Dorsolateral prefrontal cortex (tissue), 120 donors: ENCODE measurements at regions of chr14 and their contacts with region 1.

Region 1: DNA sequence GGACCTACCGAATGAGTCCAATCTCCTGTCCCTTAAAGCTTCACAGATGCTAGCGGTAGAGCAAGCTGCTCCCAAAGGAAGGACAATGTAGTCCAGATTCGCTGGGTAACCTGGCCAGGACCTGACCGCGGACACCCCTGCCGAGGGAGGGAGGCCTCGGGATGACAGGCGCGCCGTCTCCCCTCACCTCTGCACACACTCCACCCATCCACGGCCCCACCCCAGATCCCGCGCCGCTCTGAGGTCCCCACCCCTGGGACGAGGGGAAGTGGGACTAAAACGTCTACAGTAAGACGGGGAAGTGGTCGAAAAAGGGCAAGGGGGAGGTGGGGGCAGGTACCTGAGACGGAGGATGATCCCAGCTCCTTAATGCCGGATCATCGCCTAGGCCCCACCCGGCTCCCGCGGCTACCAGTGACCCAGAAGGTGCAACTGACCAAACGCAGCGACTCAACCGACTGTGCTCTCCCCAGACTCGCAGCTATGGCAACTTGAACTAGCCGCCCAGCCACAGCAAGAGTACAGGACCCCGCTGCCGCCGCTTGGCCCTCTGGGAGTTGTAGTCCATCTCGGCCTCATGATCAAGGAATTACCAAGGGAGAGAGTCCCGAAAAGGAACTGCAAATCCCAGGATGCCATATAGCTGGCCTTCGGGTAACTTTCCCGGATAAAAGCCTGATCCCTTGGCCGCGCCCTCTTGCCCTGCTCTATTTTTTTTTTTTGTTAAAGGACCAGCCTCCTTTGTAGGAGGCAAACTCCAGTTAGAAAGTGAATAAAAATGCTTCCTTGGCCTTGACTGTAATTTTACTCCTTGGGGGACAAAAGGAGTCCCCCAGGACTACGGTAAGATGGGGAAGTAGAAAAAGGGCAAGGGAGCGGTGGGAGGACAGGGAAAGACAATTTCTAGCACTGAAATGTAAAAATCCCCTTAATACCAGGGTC is at the start of gene CEP128:
- DNase-seq: peak; percentile 90 to 97 (median 96)
- H3K4me3 ChIP-seq: peak within 1 kb of the TSS; percentile 57 to 96 (median 79)
- H3K27ac ChIP-seq: peak within 1 kb of the TSS in 36 of 59 donors; percentile 2 to 74 (median 49)
- H3K27me3 ChIP-seq: peaks cover 0 to 11% (median 0%) of the 10 kb centered on the region in 45 donors
- CTCF ChIP-seq: peak in 31 of 56 donors; percentile 4 to 61 (median 30)
- total RNA-seq, gene CEP128: 5.2 to 21.4 (median 13.1) TPM

Region 2: GRCh38 chr14:81220830-81221578 is 279.5 kb after region 1 on chr14 and contains the start of gene GTF2A1:
- intact Hi-C with region 1: loop called in 1 of 2 experiments (anchors 5 kb)
- DNase-seq: peak; percentile 84 to 97 (median 94)
- H3K4me3 ChIP-seq: peak within 1 kb of the TSS; percentile 62 to 96 (median 83)
- H3K27ac ChIP-seq: peak within 1 kb of the TSS; percentile 96 to 100 (median 99)
- H3K27me3 ChIP-seq: no peaks in the 10 kb centered on the region
- CTCF ChIP-seq: peak in 15 of 56 donors; percentile 3 to 37 (median 23)
- total RNA-seq, gene GTF2A1: 28.5 to 73.1 (median 53.1) TPM

Region 3: DNA sequence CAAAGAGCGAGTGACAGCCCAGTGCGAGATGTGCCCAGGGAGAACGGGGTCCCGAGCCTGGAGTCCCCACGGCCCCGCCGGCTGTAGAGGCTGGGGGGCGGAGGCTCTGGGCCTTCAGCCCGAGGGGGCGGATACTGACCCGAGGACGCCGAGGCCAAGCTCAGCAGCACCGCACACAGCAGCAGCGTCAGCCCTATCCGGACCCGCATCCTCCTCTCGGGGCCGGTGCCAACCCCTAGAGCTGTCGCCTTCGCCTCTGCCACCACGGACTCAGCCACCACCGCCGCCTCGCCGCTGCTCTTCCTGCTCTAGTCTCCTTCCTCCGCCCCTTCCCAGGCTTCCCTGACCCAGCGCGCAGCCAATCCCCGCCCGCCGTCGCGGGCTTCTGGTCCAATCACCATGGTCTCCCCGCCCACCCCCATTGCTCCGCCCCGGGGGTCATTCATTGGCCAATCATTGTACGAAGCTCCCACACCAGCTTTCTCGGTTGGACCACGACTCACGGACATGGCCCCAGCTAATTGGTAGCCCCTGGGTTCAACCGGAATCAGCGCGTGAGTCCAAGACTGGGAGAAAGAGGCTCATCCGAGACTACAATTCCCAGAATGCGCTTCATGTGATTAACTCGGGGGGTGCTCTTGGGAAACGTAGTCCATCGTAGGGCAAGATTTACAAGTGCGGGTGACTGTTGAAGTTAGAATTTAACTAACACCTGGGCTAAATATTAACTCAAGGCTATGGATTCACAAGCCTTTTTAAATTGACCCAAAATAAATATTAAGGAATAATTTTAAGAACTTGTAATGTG is 592.2 kb after region 1 on chr14 and contains the start of gene SEL1L:
- intact Hi-C with region 1: loop called in 1 of 2 experiments (anchors 5 kb)
- DNase-seq: peak; percentile 95 to 99 (median 99)
- H3K4me3 ChIP-seq: peak within 1 kb of the TSS; percentile 64 to 100 (median 96)
- H3K27ac ChIP-seq: peak within 1 kb of the TSS in 38 of 59 donors; percentile 4 to 85 (median 50)
- H3K27me3 ChIP-seq: peaks cover 0 to 2% (median 0%) of the 10 kb centered on the region in 45 donors
- CTCF ChIP-seq: peak in 22 of 56 donors; percentile 7 to 46 (median 23)
- total RNA-seq, gene SEL1L: 43.9 to 104 (median 80.9) TPM